HepG2 (cell line): ENCODE measurements at regions of chr17 and their contacts with region 1.

Region 1: GRCh38 chr17:80008383-80008840 is 27.3 kb downstream of the TBC1D16 start:
- DNase-seq: peak; percentile 78
- ATAC-seq: peak; percentile 79
- H3K4me3 ChIP-seq: no peak overlapping the region
- H3K27ac ChIP-seq: no peak overlapping the region
- H3K4me1 ChIP-seq: peaks cover 24% of the 10 kb centered on the region
- H3K27me3 ChIP-seq: no peaks in the 10 kb centered on the region
- CTCF ChIP-seq: peak; percentile 98
- EP300 ChIP-seq: no peak
- POLR2A ChIP-seq: no peak
- RAD21 ChIP-seq: peak; percentile 99

Region 2: DNA sequence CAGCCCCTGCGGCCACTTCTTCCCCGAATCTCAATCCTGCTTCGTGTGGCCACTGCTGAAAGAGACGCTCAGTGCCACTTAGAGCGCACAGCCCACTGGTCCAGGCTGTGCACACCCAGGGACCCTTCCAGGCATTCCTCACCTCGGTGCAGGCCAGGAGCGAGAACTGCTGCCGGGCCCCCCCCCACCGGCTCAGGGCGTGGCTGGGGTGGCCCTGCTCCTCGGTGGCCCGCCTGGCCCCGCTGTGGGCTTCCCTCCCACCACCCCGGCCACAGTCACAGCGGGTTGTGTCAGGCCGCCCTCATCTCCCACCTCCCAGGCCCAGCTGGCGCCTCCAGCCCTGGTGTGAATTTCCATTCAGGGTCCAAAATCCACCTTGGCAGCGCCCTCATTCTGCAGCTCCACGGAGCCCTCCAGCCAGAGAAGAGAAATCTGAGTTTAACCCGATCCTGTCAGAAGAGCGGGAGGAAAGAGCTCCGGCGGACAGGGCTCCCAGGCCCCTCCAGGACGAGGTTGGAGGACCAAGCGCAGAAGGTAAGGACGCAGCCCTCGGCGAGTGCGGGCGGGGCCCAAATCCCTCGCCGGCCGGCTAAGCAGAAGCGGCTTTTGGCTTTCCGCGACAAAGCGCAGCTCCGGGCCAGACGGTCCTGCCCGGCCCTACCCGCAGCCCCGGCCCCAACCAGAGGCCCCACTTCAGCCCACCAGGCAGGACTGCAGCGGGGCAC is 15.2 kb after region 1 on chr17:
- CTCF ChIA-PET with region 1: interaction called, 4 read pairs
- POLR2A ChIA-PET with region 1: interaction called, 16 read pairs
- in situ Hi-C with region 1: no loop called
- intact Hi-C with region 1: no loop called
- DNase-seq: peak; percentile 95
- ATAC-seq: peak; percentile 89
- H3K4me3 ChIP-seq: peak overlapping the region; percentile 48 to 74 (median 64); a peak in 5 of 6 replicates
- H3K27ac ChIP-seq: peak overlapping the region; percentile 70
- H3K4me1 ChIP-seq: peaks cover 72% of the 10 kb centered on the region
- H3K27me3 ChIP-seq: no peaks in the 10 kb centered on the region
- CTCF ChIP-seq: peak; percentile 61
- EP300 ChIP-seq: peak in 1 of 2 experiments; percentile 74; a peak in 2 of 4 replicates
- POLR2A ChIP-seq: peak; percentile 33 to 43; a peak in 2 of 4 replicates
- RAD21 ChIP-seq: peak; percentile 63

Region 3: DNA sequence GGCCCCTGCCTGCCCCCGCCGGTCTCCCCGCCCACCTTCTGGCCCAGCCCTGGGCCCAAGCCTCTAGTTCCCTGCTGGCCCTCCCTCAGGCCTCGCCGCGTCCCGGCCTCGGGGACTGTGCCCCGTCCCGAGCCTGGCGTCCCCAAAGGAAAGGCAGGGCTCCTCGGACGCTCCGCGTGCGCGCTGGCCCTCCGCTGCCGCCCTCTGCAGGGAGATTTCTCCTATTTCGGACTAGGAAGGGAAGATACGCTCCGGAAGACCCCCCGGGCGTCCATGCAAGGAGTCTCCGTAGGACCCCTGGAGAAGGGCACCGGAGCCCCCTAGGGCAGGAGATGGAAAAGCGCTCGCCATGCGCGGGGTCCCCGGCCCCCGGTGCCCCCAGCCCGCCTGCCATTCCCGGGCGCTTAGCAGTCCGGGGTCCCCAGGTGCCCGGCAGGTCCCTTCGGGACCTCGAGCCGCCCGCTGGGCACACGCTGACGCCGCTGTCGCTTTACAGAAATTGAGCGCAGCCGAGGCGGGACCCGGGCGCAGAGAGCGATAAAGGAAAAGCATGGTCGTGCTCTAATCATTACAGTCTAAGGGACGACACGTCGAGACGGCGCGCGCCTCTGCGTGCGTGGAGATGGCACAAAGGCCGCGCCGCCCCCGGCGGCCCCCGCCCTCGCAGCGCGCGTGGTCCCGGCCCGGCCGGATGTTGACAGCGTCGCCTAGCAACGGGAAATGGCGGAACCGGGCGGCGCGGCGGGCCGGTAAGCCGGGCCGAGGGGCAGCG is 27.7 kb after region 1 on chr17 and contains the start of gene CCDC40:
- CTCF ChIA-PET with region 1: interaction called, 7 read pairs
- POLR2A ChIA-PET with region 1: interaction called, 3 read pairs
- in situ Hi-C with region 1: no loop called
- intact Hi-C with region 1: loop called (anchors 1 kb)
- DNase-seq: peak; percentile 72
- ATAC-seq: peak; percentile 92
- H3K4me3 ChIP-seq: peak within 1 kb of the TSS; percentile 78 to 96 (median 91)
- H3K27ac ChIP-seq: peak within 1 kb of the TSS; percentile 96
- H3K4me1 ChIP-seq: peaks cover 43% of the 10 kb centered on the region
- H3K27me3 ChIP-seq: no peaks in the 10 kb centered on the region; a peak in 1 of 5 replicates
- CTCF ChIP-seq: peak; percentile 39
- EP300 ChIP-seq: peak in 1 of 2 experiments; percentile 52; a peak in 1 of 4 replicates
- POLR2A ChIP-seq: peak; percentile 85 to 91
- RAD21 ChIP-seq: no peak; the same call in none of the 2 replicates
- total RNA-seq, gene CCDC40: 3.8 and 5.5 TPM in 2 replicates

Region 4: GRCh38 chr17:80082403-80083135 is 74.2 kb after region 1 on chr17:
- CTCF ChIA-PET with region 1: interaction called, 15 read pairs
- POLR2A ChIA-PET with region 1: no interaction called
- in situ Hi-C with region 1: loop called (anchors 5 kb)
- intact Hi-C with region 1: loop called (anchors 1 kb)
- DNase-seq: peak; percentile 78
- ATAC-seq: peak; percentile 72
- H3K4me3 ChIP-seq: peak overlapping the region in 1 of 3 experiments; percentile 32; a peak in 2 of 6 replicates
- H3K27ac ChIP-seq: no peak overlapping the region
- H3K4me1 ChIP-seq: peaks cover 23% of the 10 kb centered on the region
- H3K27me3 ChIP-seq: peaks cover 8 to 47% of the 10 kb centered on the region in 2 experiments
- CTCF ChIP-seq: peak; percentile 89
- EP300 ChIP-seq: no peak
- POLR2A ChIP-seq: no peak
- RAD21 ChIP-seq: peak; percentile 71

Region 5: GRCh38 chr17:80124351-80124981 is 116.1 kb after region 1 on chr17:
- CTCF ChIA-PET with region 1: interaction called, 7 read pairs
- POLR2A ChIA-PET with region 1: interaction called, 6 read pairs
- in situ Hi-C with region 1: loop called (anchors 5 kb)
- intact Hi-C with region 1: loop called (anchors 1 kb)
- DNase-seq: peak; percentile 75
- ATAC-seq: peak; percentile 95
- H3K4me3 ChIP-seq: peak overlapping the region in 1 of 3 experiments; percentile 0; a peak in 1 of 6 replicates
- H3K27ac ChIP-seq: no peak overlapping the region
- H3K4me1 ChIP-seq: peaks cover 20% of the 10 kb centered on the region
- H3K27me3 ChIP-seq: no peaks in the 10 kb centered on the region; a peak in 2 of 5 replicates
- CTCF ChIP-seq: peak; percentile 89
- EP300 ChIP-seq: 0 out of 4 replicates have a peak, but pooled peaks of 1 of the 2 experiments have one; percentile 23
- POLR2A ChIP-seq: no peak
- RAD21 ChIP-seq: peak; percentile 84